Activated T-helper 1 cell treated with anti-CD3 and anti-CD28 coated beads, Interleukin-12 subunit alpha, Interleukin-12 subunit beta, Interleukin-2, Interleukin-4 antibody, amounts not matched to agents 30 ng/mL and 10 ng/mL and 1 ng/mL, durations not matched to agents 14 hours and 24 hours and 36 hours (primary cell): ENCODE measurements at regions of chr14 and their contacts with region 1.

Region 1: GRCh38 chr14:27090716-27091115 is 492.9 kb upstream of the NOVA1 start:
- DNase-seq: no peak
- H3K4me3 Mint-ChIP-seq: no peak overlapping the region
- H3K27ac Mint-ChIP-seq: no peak overlapping the region
- H3K4me1 Mint-ChIP-seq: no peaks in the 10 kb centered on the region
- H3K27me3 Mint-ChIP-seq: no peaks in the 10 kb centered on the region

Region 2: DNA sequence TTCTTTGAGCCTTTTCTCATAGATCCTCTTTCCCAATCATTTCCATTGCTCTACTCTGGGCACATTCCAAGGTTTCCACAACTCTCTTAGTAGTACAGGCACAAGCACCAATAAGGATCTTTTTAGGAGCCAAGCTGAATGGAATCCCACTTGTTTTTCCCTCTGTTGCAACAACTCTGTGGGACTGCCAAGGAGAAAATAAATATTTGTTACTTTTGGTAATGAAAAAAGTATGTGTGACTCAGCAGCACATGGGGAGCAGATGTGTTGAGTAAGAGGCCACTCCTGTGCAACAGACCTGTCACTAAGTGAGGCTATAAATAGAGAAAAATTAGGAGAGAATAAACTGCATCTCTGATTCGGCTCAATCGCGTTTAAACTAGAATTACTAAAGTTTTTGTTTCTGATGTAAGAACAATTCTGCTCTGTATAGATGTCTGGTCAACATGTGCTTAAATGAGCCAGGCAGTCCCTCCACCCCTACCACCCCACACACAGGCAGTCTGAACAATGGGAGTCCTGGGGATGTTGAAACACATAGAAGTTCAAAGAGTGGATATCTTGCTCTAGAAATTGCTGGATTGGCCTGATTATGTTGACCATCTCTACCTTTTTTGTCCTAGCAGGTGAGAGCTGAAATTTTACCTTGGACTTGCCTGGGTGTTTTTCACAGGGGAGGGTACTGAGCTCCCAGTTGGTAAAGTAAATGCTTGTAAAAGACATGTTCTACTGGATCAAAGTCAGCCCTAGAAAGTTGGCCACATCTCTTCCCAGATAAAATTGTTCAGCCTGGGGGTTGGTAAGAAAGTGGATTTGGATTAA is 248.6 kb before region 1 on chr14:
- intact Hi-C with region 1: no loop called
- DNase-seq: no peak
- H3K4me3 Mint-ChIP-seq: no peak overlapping the region
- H3K27ac Mint-ChIP-seq: no peak overlapping the region
- H3K4me1 Mint-ChIP-seq: no peaks in the 10 kb centered on the region
- H3K27me3 Mint-ChIP-seq: no peaks in the 10 kb centered on the region

Region 3: DNA sequence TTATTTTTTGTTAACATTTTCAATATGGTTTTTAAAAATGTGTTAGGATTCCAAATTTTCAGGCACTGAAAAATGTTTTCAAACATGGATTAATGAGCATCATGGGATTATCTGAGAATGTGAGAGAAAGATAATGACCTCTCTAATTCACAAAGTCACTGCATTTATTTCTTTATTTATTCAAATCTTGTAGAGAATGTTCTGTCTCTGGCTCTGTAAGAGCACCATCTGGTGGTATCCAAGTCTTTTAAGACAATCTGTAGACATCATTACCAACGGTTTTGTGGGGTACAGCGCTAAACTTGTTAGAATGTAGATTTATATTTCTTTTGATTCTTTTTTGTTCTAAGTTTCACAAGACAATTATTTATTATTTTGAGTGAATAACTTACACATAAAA is 463.1 kb after region 1 on chr14:
- intact Hi-C with region 1: loop called (anchors 10 kb)
- DNase-seq: no peak
- H3K4me3 Mint-ChIP-seq: no peak overlapping the region
- H3K27ac Mint-ChIP-seq: no peak overlapping the region
- H3K4me1 Mint-ChIP-seq: no peaks in the 10 kb centered on the region
- H3K27me3 Mint-ChIP-seq: no peaks in the 10 kb centered on the region